WTC11 (cell line): ENCODE measurements at regions of chr13 and their contacts with region 1.

Region 1: GRCh38 chr13:110161112-110161882 is 145.7 kb downstream of the COL4A1 start:
- DNase-seq: no peak
- ATAC-seq: no peak
- H3K4me3 Mint-ChIP-seq: no peak overlapping the region
- H3K27ac Mint-ChIP-seq: no peak overlapping the region
- H3K4me1 Mint-ChIP-seq: peaks cover 3% of the 10 kb centered on the region; the same call in 1 of the 2 replicates
- H3K27me3 Mint-ChIP-seq: no peaks in the 10 kb centered on the region
- CTCF ChIP-seq: no peak

Region 2: GRCh38 chr13:110150384-110151101 is 10.8 kb before region 1 on chr13:
- CTCF ChIA-PET with region 1: no interaction called
- POLR2A ChIA-PET with region 1: no interaction called
- DNase-seq: no peak
- ATAC-seq: no peak
- H3K4me3 Mint-ChIP-seq: no peak overlapping the region
- H3K27ac Mint-ChIP-seq: no peak overlapping the region
- H3K4me1 Mint-ChIP-seq: peaks cover 7% of the 10 kb centered on the region
- H3K27me3 Mint-ChIP-seq: no peaks in the 10 kb centered on the region; the same call in 1 of the 2 replicates
- CTCF ChIP-seq: no peak

Region 3: DNA sequence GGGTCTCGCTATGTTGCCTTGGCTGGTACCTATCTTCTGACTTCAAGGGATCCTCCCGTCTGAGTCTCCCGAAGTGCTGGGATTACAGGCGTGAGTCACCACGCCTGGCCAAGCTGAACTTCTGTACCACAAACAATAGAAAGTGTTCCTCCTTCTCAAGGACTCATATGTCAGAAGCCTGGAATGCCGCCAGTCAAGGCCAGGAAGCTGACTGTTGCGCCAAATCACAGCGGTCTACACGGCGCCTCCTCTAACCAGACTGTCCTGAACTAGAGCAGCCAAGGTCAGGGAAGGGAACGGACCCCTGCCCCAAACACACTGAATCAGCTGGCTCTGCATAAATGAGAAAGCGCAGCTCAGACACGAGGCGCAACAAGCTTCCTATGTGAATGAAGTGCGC is 385.6 kb after region 1 on chr13:
- CTCF ChIA-PET with region 1: no interaction called
- POLR2A ChIA-PET with region 1: interaction called, 11 read pairs
- DNase-seq: no peak
- ATAC-seq: no peak
- H3K4me3 Mint-ChIP-seq: no peak overlapping the region
- H3K27ac Mint-ChIP-seq: no peak overlapping the region
- H3K4me1 Mint-ChIP-seq: peaks cover 3% of the 10 kb centered on the region; the same call in 1 of the 2 replicates
- H3K27me3 Mint-ChIP-seq: no peaks in the 10 kb centered on the region
- CTCF ChIP-seq: no peak